ENCODE measurements at regions of chrX and their contacts with region 1.

Region 1: DNA sequence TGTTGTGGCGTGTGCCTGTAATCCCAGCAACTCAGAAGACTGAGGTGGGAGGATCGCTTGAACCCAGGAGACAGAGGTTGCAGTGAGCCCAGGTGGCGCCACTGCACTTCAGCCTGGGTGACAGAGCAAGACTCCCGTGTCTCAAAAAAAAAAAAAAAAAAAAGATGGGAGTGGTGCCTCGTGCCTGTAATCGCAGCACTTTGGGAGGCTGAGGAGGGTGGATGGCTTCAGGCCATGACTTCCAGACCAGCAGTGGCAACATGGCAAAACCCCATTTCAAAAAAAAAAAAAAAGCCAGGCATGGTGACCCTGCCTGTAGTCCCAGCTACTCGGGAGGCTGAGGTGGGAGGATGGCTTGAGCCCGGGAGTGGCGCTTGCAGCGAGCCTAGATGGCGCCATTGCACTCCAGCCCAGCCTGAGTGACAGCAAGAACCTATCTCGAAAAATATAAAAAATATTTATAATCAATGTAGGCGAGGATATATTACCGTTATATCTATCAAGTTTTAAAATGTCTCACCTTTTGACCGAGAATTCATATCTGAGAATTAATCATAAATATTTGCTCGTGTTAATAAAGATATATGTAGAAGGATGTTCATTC is 27.0 kb downstream of the EIF2S3 start:
- DNase-seq: peak; percentile 59
- H3K4me3 ChIP-seq: no peak overlapping the region
- H3K27ac ChIP-seq: no peak overlapping the region
- H3K4me1 ChIP-seq: no peaks in the 10 kb centered on the region
- H3K27me3 ChIP-seq: no peaks in the 10 kb centered on the region
- CTCF ChIP-seq: peak; percentile 26 to 54

Region 2: DNA sequence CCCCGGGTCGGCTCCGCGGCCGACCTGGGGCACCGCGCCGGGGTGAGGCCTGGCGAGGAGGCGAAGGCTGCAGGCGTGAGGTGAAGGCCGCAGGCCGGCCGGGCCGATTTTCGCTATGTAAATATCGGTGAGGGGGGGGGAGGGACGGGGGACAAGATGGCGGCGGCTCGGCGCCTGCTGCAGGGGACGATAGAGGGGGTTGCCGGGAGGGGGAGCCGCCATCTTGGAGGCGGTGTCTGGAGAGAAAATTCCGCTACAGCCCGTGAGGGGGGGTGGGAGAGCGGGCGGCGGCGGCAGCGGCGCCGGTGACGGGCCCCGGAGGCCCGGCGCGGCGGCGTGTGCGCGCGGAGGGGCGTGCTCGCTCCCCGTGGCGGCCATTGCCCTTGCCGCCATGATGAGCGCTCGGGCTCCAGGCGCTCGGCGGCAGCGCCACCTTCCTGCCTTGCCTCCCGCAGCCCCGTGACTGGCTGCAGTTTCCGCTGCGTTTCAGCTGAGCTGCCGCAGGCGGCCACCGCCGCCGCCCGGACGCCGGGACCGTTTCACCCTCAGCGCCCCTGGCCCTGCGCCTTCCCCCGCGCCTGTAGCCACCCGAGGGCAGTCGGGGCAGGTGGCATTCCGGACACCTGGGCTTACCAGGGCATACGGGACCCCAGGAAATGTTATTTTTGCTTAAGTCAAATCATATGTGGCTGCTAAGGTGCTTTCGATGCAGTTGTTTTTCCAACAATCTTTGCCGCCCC is 68.5 kb after region 1 on chrX:
- CTCF ChIA-PET with region 1: no interaction called
- dilution Hi-C with region 1: no loop called
- in situ Hi-C with region 1: no loop called
- intact Hi-C with region 1: loop called (anchors 2 kb)
- DNase-seq: peak; percentile 86
- H3K4me3 ChIP-seq: peak overlapping the region; percentile 86 to 98 (median 97)
- H3K27ac ChIP-seq: peak overlapping the region; percentile 82
- H3K4me1 ChIP-seq: peaks cover 49% of the 10 kb centered on the region
- H3K27me3 ChIP-seq: no peaks in the 10 kb centered on the region
- CTCF ChIP-seq: peak; percentile 8 to 39

Region 3: DNA sequence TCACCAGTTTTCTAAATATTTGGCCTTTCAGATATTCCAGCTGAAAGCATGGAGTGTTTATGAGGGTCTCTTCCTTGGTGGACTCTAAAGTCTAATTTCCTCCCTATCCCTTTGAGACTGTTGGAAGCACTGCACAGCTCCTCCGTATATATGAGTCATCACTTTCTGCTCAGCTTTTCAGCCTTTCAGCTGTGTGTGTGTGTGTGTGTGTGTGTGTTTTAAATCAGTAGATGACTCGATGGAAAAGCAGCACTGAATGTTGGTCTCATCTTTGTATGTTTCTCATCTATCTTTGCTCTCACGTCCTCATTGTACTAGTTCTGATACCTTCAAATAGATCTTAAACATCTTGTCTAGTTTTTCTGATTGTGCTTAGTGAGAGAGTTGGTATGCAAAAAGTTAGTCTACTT is 149.4 kb after region 1 on chrX:
- CTCF ChIA-PET with region 1: no interaction called
- dilution Hi-C with region 1: no loop called
- in situ Hi-C with region 1: loop called in 1 of 2 experiments (anchors 10 kb)
- intact Hi-C with region 1: no loop called
- DNase-seq: peak; percentile 84
- H3K4me3 ChIP-seq: peak overlapping the region in 2 of 3 experiments; percentile 7 to 13
- H3K27ac ChIP-seq: no peak overlapping the region
- H3K4me1 ChIP-seq: peaks cover 12% of the 10 kb centered on the region
- H3K27me3 ChIP-seq: no peaks in the 10 kb centered on the region
- CTCF ChIP-seq: no peak

Region 4: DNA sequence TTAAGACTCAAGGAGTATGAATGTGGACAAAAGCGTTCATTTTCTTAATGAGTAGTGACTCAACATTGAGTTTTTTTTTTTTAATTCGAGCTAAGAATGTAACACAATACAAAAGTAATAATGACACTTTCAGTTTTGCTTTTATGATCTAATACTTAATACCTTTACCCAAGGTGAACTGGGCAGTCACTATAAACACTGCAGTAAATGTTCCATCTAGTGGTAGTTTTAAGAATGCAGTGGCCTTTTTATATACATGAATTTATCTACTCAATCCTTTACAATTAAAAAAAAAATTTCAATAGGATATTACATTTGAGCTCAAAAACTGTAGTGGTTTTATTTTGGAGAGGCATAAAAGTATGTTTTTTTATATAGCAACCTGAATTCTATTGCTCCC is 417.2 kb after region 1 on chrX:
- CTCF ChIA-PET with region 1: no interaction called
- dilution Hi-C with region 1: no loop called
- in situ Hi-C with region 1: no loop called
- intact Hi-C with region 1: no loop called
- DNase-seq: peak; percentile 25
- H3K4me3 ChIP-seq: no peak overlapping the region
- H3K27ac ChIP-seq: no peak overlapping the region
- H3K4me1 ChIP-seq: no peaks in the 10 kb centered on the region
- H3K27me3 ChIP-seq: no peaks in the 10 kb centered on the region
- CTCF ChIP-seq: peak; percentile 63 to 66